Cardiac septum (tissue), 1 donor: ENCODE measurements at regions of chr19 and their contacts with region 1.

Region 1: DNA sequence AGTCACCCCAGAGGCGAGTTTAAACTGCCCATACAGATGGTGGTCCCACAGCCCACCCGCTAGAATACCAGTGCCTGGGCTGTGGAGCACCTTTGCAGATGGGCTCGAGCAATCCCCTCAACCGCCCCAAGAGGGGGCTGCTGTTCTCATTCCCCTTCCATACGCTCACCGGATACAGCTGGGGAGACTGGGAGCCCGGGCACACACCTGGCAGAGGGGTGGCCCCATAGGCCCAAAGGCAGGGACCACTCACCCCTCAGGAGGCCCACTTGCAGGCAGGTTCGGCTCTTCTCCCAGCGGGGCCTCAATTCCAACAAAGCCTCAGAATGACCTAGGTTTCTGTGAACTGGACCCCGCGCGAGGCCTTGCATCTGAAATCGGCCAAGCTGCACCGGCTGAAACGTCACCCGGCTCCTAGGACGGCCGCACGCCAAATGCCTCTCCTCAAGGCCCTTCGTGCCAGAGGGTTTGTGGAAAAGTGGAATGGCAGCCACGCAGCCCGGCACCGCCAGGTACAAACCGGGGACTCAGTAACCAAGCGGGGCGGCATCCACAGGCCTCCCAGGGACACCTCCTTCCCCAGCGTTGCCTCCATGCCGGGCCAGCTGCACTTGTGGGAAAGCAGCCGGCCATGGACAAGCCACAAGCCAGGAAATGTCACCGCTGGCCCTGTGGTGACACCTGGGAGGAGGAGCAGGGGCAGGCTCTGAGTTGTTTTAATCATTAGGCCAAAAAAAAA is 18.7 kb downstream of the MLLT1 start:
- DNase-seq: no peak

Region 2: DNA sequence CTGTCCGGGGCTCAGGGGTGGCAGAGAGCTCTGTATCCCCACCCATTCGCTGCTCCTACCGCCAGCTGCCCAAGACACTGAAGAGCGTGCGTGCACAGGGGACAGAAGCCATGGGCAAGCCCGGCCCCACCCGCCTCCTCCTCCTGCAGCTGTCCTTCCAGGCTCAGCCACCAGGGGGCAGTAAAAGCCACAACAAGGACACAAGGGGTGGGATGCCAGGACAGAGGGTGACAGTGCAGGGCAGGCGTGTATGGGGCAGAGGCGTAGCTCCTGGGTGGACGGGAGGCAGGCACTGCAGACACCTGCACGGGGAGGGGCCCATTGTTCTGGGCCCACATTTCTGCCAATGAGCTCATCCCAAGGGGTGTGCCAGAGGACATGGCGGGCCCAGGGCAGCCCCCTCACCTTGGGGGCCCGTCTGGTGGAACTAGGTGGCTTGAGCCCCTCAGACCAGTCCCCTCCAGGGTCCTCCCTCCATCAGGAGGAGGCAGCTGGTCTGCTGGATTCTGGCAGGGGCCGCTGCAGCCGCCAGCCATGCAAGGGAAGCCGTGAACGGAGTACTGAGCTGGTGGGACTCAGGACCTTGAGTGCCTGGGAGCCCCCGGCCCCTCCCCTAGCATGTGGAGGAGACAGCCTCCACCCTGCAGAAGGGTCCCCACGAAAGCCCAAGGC is 42.5 kb before region 1 on chr19:
- intact Hi-C with region 1: loop called (anchors 2 kb)
- DNase-seq: peak; percentile 94